Ascending aorta (tissue), 2 donors: ENCODE measurements at regions of chr11 and their contacts with region 1.

Region 1: DNA sequence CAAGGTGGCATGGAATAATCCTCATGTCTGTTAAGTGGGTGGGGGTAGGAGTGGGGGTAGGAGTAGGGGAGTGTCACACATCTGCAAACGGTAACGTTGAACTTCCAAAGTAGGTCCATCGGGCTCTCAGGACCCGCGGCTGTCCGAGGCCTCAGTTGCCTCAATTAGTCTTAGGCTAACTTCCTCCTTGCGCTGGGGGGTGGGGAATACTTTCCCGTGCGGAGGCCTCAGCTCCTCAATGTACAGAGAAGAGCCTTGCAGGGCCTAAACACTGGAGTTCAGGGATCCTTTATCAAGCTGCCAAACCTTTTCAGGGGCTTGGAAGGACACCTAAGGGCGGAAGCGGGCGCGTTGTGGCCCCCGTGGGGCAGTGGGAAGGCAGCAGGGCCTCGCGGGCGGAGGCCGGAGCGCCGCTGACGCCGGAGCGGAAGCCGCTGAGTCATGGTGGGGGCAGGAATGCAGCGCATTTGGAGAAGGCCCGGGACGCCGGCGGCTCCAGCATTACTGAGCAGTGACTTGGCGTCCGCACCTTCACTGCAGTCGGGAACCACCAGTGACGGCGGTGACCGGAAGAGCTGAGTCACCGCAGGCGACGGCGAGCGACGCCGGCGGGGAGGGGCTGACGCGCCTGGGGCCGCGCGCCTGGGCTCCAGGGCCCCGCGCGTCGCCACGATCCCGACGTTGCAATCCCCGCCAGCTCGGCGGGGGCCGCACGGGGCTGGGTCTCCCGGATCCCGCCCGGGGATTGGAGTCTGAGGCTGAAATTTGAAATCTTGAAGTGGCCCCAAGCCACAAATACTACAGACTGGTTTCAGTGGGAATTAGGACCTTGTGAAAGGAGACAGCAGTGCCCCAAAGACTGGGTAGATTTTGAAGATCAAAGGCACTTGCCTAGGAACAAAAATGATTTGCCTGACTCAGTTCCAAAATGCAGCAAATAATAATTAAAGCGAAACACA is 20.2 kb upstream of the IPO7 start:
- DNase-seq: peak; percentile 89 to 99
- H3K4me3 ChIP-seq: peak overlapping the region; percentile 34 to 59
- H3K27ac ChIP-seq: peak overlapping the region; percentile 97
- H3K4me1 ChIP-seq: peaks cover 0 to 17% of the 10 kb centered on the region in 2 donors
- H3K27me3 ChIP-seq: no peaks in the 10 kb centered on the region
- CTCF ChIP-seq: no peak

Region 2: DNA sequence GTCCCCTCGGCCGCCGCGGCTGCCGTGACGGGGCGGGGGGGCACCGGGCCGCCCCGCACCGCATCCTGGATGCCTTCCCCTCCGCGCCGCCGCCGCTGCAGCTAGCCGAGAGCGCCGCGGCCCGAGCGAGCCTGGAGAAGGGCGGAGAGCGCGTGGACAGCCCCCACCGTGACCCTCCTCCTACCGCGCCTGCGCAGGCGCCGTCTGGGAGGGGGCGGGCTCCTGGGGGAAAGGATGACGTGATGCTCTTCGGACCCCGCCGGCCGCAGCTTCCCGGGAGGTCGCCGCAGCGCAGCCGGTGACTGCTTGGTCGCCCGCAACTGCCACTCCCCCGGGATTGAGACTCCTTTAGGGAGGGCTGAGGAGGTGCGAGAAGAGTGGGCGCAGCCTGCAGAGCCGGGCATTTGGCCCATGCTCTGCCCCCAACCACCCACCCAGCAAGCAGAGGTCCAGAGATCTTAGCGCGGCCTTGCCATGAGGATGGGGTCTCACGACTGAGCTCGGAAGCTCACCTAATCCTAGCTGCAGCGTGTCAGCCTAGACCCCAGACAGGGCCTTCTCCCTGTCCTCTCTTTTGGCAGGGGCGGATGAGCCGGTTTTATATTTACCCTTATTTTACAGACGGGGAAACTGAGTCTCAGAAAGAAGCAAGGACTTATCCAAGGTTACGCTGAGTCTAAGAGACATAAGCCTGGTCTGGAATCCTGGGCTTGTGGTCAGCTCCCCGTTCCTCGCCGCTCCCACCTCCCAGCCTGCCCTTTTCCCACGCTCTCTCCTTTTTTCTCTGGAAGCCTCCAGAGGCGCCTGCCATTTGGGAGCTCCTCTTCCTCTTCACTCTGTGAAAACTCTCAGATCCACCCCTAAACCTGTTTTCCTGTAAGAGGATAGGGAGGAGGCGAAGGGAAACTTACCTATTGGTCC is 98.8 kb before region 1 on chr11 and contains the start of gene DENND5A:
- intact Hi-C with region 1: loop called (anchors 5 kb)
- DNase-seq: peak; percentile 39 to 91
- H3K4me3 ChIP-seq: peak within 1 kb of the TSS; percentile 85 to 91
- H3K27ac ChIP-seq: peak within 1 kb of the TSS; percentile 96 to 97
- H3K4me1 ChIP-seq: peaks cover 0 to 14% of the 10 kb centered on the region in 2 donors
- H3K27me3 ChIP-seq: no peaks in the 10 kb centered on the region
- CTCF ChIP-seq: no peak
- total RNA-seq, gene DENND5A: 111 TPM

Region 3: DNA sequence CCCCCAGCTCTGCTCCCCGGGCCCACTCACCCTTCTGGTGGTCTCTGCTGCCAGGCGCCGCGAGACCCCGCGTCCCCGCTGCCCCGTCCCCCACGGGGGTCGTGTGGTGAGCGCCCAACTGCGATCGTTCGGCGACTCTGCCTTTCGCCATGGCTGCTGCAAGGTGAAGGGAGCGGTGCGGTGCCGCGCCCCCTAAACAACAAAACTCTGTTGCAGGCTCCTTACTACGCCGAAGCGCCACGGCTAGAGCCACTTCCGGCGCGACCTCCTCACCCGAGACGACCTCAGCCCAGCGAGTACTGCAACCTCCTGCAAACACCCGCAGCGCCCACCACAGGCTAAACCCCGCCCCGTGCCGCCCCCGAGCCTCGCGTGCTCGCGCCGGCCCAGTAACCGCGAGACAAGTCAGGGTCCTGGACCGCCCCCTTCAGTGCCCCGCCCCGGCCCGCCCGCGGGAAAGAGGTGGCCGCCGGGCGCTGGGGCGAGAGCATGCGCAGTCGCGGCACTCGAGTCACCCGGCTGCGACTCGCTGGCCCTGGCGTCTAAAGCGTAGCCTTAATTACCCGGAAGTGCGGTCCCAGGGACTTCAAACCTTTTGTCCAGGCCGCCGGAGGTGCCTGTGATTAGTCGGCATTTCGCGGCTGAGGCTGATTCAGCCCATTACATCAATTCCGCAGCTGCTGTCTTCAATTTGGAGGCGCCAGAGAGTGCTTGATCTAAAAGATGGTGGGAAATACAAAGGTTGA is 49.8 kb before region 1 on chr11 and contains the start of gene TMEM41B:
- intact Hi-C with region 1: loop called (anchors 1 kb)
- DNase-seq: peak; percentile 94 to 99
- H3K4me3 ChIP-seq: peak within 1 kb of the TSS; percentile 59 to 73
- H3K27ac ChIP-seq: peak within 1 kb of the TSS; percentile 77 to 88
- H3K4me1 ChIP-seq: peaks cover 0 to 9% of the 10 kb centered on the region in 2 donors
- H3K27me3 ChIP-seq: no peaks in the 10 kb centered on the region
- CTCF ChIP-seq: peak in 2 of 3 experiments; percentile 2 to 8
- total RNA-seq, gene TMEM41B: 26.7 TPM

Region 4: DNA sequence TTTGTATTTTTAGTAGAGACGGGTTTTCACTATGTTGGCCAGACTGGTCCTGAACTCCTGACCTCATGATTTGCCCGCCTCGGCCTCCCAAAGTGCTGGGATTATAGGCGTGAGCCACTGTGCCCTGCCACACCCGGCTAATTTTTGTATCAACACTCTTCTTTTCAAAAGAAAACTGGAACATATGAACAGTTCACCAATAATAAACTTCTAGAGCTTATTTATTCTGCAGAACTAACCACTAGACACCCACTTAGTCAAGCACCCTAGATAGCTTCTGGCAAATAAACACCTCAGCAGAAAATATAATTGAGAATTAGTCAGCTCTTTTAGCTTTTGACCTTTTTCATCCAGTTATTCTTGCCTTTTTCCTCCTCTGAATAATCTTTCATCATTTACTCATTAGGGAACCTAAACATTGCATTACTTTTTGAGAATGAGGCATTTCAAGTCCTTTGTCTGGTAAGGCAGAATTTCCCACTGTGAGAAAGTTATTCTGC is 22.5 kb before region 1 on chr11:
- intact Hi-C with region 1: no loop called
- DNase-seq: no peak
- H3K4me3 ChIP-seq: no peak overlapping the region
- H3K27ac ChIP-seq: no peak overlapping the region
- H3K4me1 ChIP-seq: peaks cover 0 to 2% of the 10 kb centered on the region in 2 donors
- H3K27me3 ChIP-seq: no peaks in the 10 kb centered on the region
- CTCF ChIP-seq: no peak

Region 5: GRCh38 chr11:9384535-9385303 is 20.5 kb after region 1 on chr11 and contains the start of gene IPO7:
- intact Hi-C with region 1: loop called (anchors 1 kb)
- DNase-seq: peak; percentile 70 to 95
- H3K4me3 ChIP-seq: peak within 1 kb of the TSS; percentile 86 to 97
- H3K27ac ChIP-seq: peak within 1 kb of the TSS; percentile 94 to 99
- H3K4me1 ChIP-seq: peaks cover 0 to 36% of the 10 kb centered on the region in 2 donors
- H3K27me3 ChIP-seq: no peaks in the 10 kb centered on the region
- CTCF ChIP-seq: peak; percentile 8 to 41 (median 38)
- total RNA-seq, gene IPO7: 93.4 TPM

Region 6: DNA sequence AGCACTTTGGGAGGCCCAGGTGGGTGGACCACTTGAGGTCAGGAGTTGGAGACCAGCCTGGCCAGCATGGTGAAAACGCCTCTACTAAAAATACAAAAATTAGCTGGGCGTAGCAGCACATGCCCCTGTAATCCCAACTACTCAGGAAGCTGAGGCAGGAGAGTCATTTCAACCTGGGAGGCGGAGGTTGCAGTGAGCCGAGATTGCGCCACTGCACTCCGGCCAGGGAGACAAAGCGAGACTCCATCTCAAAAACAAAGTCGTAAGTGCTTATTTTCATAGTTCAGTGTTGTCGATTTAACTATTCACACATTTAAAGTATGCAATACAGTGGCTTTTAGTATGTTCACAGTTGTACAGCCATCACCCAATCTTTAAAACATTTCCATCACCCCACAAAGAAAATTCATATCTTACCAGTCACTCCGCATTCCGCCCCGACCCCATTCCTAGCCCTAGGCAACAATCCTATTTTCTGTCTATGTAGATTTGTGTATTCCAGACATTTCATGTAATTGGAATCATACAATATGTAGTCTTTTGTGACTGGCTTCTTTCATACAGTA is 32.0 kb after region 1 on chr11:
- intact Hi-C with region 1: no loop called
- DNase-seq: no peak
- H3K4me3 ChIP-seq: no peak overlapping the region
- H3K27ac ChIP-seq: peak overlapping the region in 1 of 2 donors; percentile 18
- H3K4me1 ChIP-seq: peaks cover 3 to 46% of the 10 kb centered on the region in 2 donors
- H3K27me3 ChIP-seq: no peaks in the 10 kb centered on the region
- CTCF ChIP-seq: no peak

Region 7: GRCh38 chr11:9460322-9461067 is 96.3 kb after region 1 on chr11 and contains the start of gene ZNF143:
- intact Hi-C with region 1: loop called (anchors 2 kb)
- DNase-seq: peak; percentile 99 to 100
- H3K4me3 ChIP-seq: peak within 1 kb of the TSS; percentile 83 to 98
- H3K27ac ChIP-seq: peak within 1 kb of the TSS; percentile 98 to 100
- H3K4me1 ChIP-seq: peaks cover 5 to 20% of the 10 kb centered on the region in 2 donors
- H3K27me3 ChIP-seq: no peaks in the 10 kb centered on the region
- CTCF ChIP-seq: peak in 1 of 3 experiments; percentile 21
- total RNA-seq, gene ZNF143: 2.7 TPM

Region 8: GRCh38 chr11:9565822-9566560 is 201.8 kb after region 1 on chr11:
- intact Hi-C with region 1: loop called (anchors 5 kb)
- DNase-seq: peak in 1 of 2 donors; percentile 94
- H3K4me3 ChIP-seq: no peak overlapping the region
- H3K27ac ChIP-seq: peak overlapping the region; percentile 93 to 96
- H3K4me1 ChIP-seq: peaks cover 23 to 48% of the 10 kb centered on the region in 2 donors
- H3K27me3 ChIP-seq: no peaks in the 10 kb centered on the region
- CTCF ChIP-seq: no peak